ENCODE measurements at regions of chr3 and their contacts with region 1.

Region 1: DNA sequence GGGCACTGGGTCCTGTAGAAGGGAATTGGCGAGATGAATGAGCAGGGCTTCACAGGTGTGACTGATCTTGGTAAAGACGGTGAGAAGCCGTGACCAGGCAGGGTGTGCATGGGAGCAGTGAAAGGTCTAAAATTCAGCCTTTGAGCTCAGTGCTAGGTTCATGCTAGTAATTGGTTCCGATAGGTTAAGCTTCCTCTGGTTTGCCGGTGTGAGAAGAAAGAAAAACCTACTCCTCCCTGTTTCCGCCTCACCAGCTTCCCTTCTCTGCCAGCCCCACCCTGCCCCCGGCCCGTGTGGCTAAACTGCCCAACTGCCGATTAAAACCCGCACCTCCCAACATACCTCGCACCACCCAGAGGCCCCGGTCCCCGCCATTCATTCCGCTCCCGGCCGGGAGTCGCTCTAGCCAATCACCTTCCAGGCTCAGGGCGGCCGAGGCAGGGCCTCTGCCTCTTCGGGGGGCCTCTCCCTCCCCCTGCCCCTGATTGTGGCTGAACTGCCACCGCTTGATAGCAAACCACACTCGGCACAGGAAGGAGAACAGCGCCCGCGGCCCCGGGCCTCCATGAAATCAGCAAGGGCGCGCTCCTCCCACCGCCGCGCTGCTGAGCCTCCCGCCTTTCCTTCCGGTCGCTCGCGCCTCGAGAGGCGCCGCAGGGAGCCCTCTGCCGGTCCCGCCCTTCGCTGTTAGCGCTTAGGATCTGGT is 7.3 kb upstream of the NRROS start:
- DNase-seq: peak; percentile 86 to 94 (median 90)
- ATAC-seq: peak; percentile 72 to 95 (median 94)
- H3K4me3 ChIP-seq: peak overlapping the region; percentile 40 to 86 (median 64)
- H3K27ac ChIP-seq: peak overlapping the region; percentile 64 to 96 (median 85)
- H3K4me1 ChIP-seq: peaks cover 0 to 65% (median 14%) of the 10 kb centered on the region in 12 donors
- H3K27me3 ChIP-seq: no peaks in the 10 kb centered on the region
- CTCF ChIP-seq: peak in 10 of 12 donors; percentile 27 to 61 (median 36)
- POLR2A ChIP-seq: peak in 1 of 2 donors; percentile 22

Region 2: DNA sequence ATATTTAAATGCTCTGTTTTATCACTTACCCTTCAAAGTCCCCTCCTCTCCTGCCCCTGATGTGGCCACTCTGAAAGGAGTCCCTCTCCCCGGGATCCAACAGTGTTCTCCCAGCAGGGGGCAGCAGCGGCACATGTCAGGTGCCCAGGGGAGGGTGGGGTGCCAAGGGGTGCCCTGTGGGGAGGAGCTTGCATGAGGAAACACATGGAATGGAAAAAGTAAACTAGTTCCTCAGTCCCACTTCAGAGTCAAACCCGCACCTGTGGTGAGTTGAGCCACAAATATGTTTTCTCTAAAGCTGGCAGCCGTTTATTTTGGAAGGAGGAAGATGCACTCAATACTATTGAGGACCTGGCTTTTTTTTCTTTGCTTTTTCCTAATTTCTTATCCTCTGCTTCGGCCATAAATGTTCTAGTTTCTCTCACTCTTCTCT is 22.8 kb before region 1 on chr3:
- intact Hi-C with region 1: loop called in 1 of 10 experiments (anchors 2 kb)
- DNase-seq: peak; percentile 86 to 95 (median 88)
- ATAC-seq: peak; percentile 77 to 95 (median 92)
- H3K4me3 ChIP-seq: peak overlapping the region in 1 of 12 donors; percentile 1
- H3K27ac ChIP-seq: peak overlapping the region in 7 of 12 donors; percentile 2 to 85 (median 44)
- H3K4me1 ChIP-seq: peaks cover 0 to 36% (median 18%) of the 10 kb centered on the region in 12 donors
- H3K27me3 ChIP-seq: peaks cover 0 to 2% (median 0%) of the 10 kb centered on the region in 9 donors
- CTCF ChIP-seq: peak; percentile 72 to 91 (median 82)
- POLR2A ChIP-seq: peak in 1 of 2 donors; percentile 13

Region 3: GRCh38 chr3:196670339-196670738 is 38.1 kb after region 1 on chr3:
- intact Hi-C with region 1: loop called in 1 of 10 experiments (anchors 5 kb)
- DNase-seq: peak in 1 of 5 donors; percentile 26
- ATAC-seq: peak; percentile 47 to 85 (median 78)
- H3K4me3 ChIP-seq: no peak overlapping the region
- H3K27ac ChIP-seq: peak overlapping the region in 8 of 12 donors; percentile 37 to 76 (median 52)
- H3K4me1 ChIP-seq: peaks cover 0 to 31% (median 1%) of the 10 kb centered on the region in 12 donors
- H3K27me3 ChIP-seq: peaks cover 0 to 3% (median 0%) of the 10 kb centered on the region in 9 donors
- CTCF ChIP-seq: no peak
- POLR2A ChIP-seq: no peak

Measured in heart left ventricle (tissue), 16 donors.